ENCODE measurements at regions of chr3 and their contacts with region 1.

Region 1: GRCh38 chr3:150286390-150287147 is 121.5 kb upstream of the TSC22D2 start:
- DNase-seq: peak; percentile 56
- H3K4me3 ChIP-seq: no peak overlapping the region
- H3K27ac ChIP-seq: no peak overlapping the region
- H3K4me1 ChIP-seq: peaks cover 4% of the 10 kb centered on the region
- H3K27me3 ChIP-seq: no peaks in the 10 kb centered on the region
- CTCF ChIP-seq: peak; percentile 57 to 72

Region 2: DNA sequence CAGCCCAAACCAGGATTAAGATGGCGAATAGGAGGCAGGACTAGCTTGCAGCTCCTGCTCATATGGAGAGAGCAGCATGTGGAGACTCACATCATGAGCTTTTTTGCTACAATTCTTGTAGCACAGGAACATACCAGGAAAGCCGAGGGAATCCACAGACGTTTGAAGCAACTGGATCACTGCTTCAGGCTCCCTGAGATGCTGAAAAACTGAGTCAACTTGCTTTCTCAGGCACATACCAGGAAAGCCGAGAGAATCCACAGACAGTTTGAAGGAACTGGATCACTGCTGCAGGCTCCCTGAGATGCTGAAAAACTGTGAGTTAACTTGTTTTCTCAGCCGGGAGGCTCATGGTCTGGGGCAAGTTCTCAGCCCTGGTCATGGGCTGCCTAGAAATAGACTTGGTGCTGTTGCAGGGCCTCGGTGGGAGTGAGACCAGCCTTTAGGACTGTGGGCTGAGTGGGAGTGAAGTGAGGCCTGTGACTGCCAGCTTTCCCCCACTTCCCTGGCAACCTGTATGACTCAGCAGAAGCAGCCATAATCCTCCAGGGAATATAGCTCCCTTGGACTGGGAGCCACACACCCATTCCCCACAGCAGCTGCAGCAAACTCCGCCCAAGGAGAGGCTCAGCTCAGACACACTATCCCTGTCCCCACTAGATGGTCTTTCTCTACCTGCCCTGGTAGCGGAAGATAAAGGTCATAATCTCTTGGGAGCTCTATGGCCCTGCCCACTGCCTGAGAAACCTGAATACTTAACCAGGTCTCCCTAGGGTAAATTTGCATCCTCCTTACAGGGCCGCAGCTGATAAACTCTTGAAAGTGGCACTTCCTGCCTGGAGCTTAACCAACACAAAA is 264.0 kb before region 1 on chr3:
- CTCF ChIA-PET with region 1: no interaction called
- dilution Hi-C with region 1: no loop called
- in situ Hi-C with region 1: no loop called
- intact Hi-C with region 1: no loop called
- DNase-seq: peak; percentile 10
- H3K4me3 ChIP-seq: no peak overlapping the region
- H3K27ac ChIP-seq: no peak overlapping the region
- H3K4me1 ChIP-seq: no peaks in the 10 kb centered on the region
- H3K27me3 ChIP-seq: no peaks in the 10 kb centered on the region
- CTCF ChIP-seq: no peak

Region 3: DNA sequence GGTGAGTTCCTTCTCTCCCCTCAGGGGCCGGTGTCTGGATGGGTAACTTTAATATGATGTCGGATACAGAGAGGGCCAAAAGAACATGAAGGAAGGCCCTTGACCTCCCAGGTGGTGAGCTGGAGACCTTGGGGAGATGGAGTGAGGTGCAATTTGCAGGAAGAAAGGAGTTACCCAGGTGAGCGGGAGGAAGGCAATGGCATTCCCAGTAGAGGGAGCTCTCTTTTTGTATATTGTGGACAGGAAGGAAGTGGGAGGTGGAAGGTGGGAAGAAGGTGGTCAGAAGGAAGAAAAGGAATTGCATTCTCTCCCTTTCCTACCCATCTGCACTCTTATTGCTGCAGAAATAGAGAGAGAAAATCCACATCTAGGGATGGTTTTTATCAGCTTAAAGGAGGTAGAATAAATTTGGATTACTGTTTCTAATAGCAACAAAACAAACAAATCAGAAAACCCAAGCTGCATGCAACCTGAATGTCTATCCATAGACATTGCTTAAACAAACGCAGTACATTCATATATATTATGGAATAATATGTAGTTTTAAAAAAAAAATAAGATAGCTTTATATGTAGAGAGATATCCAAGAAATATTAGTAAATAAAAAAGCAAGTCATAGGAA is 47.5 kb before region 1 on chr3:
- CTCF ChIA-PET with region 1: no interaction called
- dilution Hi-C with region 1: no loop called
- in situ Hi-C with region 1: no loop called
- intact Hi-C with region 1: loop called (anchors 1 kb)
- DNase-seq: peak; percentile 59
- H3K4me3 ChIP-seq: no peak overlapping the region
- H3K27ac ChIP-seq: no peak overlapping the region
- H3K4me1 ChIP-seq: peaks cover 38% of the 10 kb centered on the region
- H3K27me3 ChIP-seq: no peaks in the 10 kb centered on the region
- CTCF ChIP-seq: peak; percentile 62 to 72

Measured in mammary epithelial cell (primary cell).